Activated B cell treated with CpG ODN at 0.5 μM for 24 hours (primary cell): ENCODE measurements at regions of chr12 and their contacts with region 1.

Region 1: GRCh38 chr12:6533923-6534694 is at the start of gene GAPDH:
- DNase-seq: peak; percentile 75
- ATAC-seq: peak; percentile 70
- H3K4me3 Mint-ChIP-seq: peak within 1 kb of the TSS; percentile 94
- H3K27ac Mint-ChIP-seq: peak within 1 kb of the TSS; percentile 93
- H3K4me1 Mint-ChIP-seq: peaks cover 47% of the 10 kb centered on the region
- H3K27me3 Mint-ChIP-seq: no peaks in the 10 kb centered on the region
- CTCF ChIP-seq: no peak
- total RNA-seq, gene GAPDH: 1,003 and 1,033 TPM in 2 replicates

Region 2: DNA sequence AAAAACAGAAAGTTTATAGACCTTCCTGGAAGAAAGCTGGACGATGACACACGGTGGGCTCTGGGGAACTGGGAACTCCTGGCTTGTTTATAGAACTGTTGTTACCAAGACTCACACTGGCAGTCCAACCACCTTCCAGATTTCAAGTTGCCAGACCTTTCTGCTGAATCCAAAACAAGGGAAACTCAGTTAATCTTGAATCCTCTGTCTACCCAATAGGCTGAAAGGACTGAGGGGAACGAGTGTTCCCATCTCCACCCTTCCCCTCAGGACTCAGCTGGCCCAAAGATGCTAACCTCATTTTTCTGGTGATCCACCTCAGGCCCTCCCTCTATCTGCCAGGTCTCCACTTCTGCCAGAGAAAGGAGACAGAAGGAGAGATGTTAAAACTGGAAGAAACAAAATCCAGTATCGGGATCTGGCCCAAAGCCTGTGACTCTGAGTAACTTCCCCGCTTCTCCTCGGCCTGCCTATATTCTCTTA is 820.5 kb before region 1 on chr12:
- CTCF ChIA-PET with region 1: no interaction called
- POLR2A ChIA-PET with region 1: no interaction called
- intact Hi-C with region 1: no loop called
- DNase-seq: no peak
- ATAC-seq: no peak
- H3K4me3 Mint-ChIP-seq: no peak overlapping the region
- H3K27ac Mint-ChIP-seq: no peak overlapping the region
- H3K4me1 Mint-ChIP-seq: no peaks in the 10 kb centered on the region
- H3K27me3 Mint-ChIP-seq: no peaks in the 10 kb centered on the region
- CTCF ChIP-seq: no peak

Region 3: GRCh38 chr12:5988659-5989116 is 545.4 kb before region 1 on chr12:
- CTCF ChIA-PET with region 1: interaction called, 3 read pairs
- POLR2A ChIA-PET with region 1: no interaction called
- intact Hi-C with region 1: loop called (anchors 5 kb)
- DNase-seq: peak; percentile 60
- ATAC-seq: peak; percentile 91
- H3K4me3 Mint-ChIP-seq: no peak overlapping the region
- H3K27ac Mint-ChIP-seq: no peak overlapping the region
- H3K4me1 Mint-ChIP-seq: no peaks in the 10 kb centered on the region
- H3K27me3 Mint-ChIP-seq: peaks cover 2% of the 10 kb centered on the region
- CTCF ChIP-seq: peak; percentile 59

Region 4: GRCh38 chr12:6285063-6285477 is 249.0 kb before region 1 on chr12:
- CTCF ChIA-PET with region 1: interaction called, 3 read pairs
- POLR2A ChIA-PET with region 1: no interaction called
- intact Hi-C with region 1: loop called (anchors 1 kb)
- DNase-seq: no peak
- ATAC-seq: peak; percentile 81
- H3K4me3 Mint-ChIP-seq: no peak overlapping the region
- H3K27ac Mint-ChIP-seq: no peak overlapping the region
- H3K4me1 Mint-ChIP-seq: no peaks in the 10 kb centered on the region
- H3K27me3 Mint-ChIP-seq: peaks cover 41% of the 10 kb centered on the region
- CTCF ChIP-seq: peak; percentile 79

Region 5: GRCh38 chr12:6323340-6323994 is 210.6 kb before region 1 on chr12:
- CTCF ChIA-PET with region 1: no interaction called
- POLR2A ChIA-PET with region 1: no interaction called
- intact Hi-C with region 1: loop called (anchors 5 kb)
- DNase-seq: no peak
- ATAC-seq: peak; percentile 63
- H3K4me3 Mint-ChIP-seq: peak overlapping the region; percentile 8
- H3K27ac Mint-ChIP-seq: peak overlapping the region; percentile 42
- H3K4me1 Mint-ChIP-seq: peaks cover 19% of the 10 kb centered on the region
- H3K27me3 Mint-ChIP-seq: peaks cover 77% of the 10 kb centered on the region
- CTCF ChIP-seq: no peak

Region 6: GRCh38 chr12:6443361-6443983 is 90.6 kb before region 1 on chr12:
- CTCF ChIA-PET with region 1: interaction called, 4 read pairs
- POLR2A ChIA-PET with region 1: interaction called, 17 read pairs
- intact Hi-C with region 1: no loop called
- DNase-seq: no peak
- ATAC-seq: peak; percentile 49
- H3K4me3 Mint-ChIP-seq: peak overlapping the region; percentile 84
- H3K27ac Mint-ChIP-seq: peak overlapping the region; percentile 92
- H3K4me1 Mint-ChIP-seq: peaks cover 69% of the 10 kb centered on the region
- H3K27me3 Mint-ChIP-seq: no peaks in the 10 kb centered on the region
- CTCF ChIP-seq: no peak

Region 7: DNA sequence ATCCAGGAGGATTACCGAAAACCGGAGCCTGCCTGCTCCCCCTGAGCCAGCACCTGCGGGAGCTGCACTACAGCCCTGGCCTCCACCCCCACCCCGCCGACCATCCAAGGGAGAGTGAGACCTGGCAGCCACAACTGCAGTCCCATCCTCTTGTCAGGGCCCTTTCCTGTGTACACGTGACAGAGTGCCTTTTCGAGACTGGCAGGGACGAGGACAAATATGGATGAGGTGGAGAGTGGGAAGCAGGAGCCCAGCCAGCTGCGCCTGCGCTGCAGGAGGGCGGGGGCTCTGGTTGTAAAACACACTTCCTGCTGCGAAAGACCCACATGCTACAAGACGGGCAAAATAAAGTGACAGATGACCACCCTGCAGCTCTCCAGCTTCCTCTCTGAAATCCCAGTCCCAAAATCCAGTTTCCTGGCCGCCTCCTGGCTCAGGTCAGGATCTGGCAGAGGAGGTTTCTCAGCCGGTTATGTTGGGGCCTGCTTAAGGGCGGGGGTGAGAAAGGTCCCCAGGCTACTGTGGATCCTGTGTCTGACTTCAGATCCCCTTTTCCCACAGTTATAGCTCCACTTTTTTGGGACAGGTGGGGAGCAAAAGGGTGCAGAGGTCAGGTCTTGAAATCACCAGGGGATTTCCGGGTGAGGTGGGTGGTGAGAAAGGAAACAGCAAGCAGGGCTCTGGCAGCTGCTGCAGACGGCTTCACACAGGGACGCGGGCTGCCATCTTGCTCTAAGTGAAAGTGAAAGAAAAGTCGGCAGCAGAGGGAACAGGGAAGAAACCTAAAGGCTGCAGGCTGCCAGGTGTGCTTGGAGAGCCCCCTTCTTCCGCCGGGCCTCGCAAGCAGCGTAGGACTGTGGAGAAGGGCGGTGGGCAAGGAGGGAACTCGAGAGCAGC is 82.5 kb before region 1 on chr12 and contains the start of gene TAPBPL:
- CTCF ChIA-PET with region 1: interaction called, 6 read pairs
- POLR2A ChIA-PET with region 1: interaction called, 18 read pairs
- intact Hi-C with region 1: no loop called
- DNase-seq: peak; percentile 62
- ATAC-seq: peak; percentile 86
- H3K4me3 Mint-ChIP-seq: peak within 1 kb of the TSS; percentile 97
- H3K27ac Mint-ChIP-seq: peak within 1 kb of the TSS; percentile 99
- H3K4me1 Mint-ChIP-seq: peaks cover 58% of the 10 kb centered on the region
- H3K27me3 Mint-ChIP-seq: no peaks in the 10 kb centered on the region
- CTCF ChIP-seq: no peak
- total RNA-seq, gene TAPBPL: 52.5 and 64.0 TPM in 2 replicates

Region 8: DNA sequence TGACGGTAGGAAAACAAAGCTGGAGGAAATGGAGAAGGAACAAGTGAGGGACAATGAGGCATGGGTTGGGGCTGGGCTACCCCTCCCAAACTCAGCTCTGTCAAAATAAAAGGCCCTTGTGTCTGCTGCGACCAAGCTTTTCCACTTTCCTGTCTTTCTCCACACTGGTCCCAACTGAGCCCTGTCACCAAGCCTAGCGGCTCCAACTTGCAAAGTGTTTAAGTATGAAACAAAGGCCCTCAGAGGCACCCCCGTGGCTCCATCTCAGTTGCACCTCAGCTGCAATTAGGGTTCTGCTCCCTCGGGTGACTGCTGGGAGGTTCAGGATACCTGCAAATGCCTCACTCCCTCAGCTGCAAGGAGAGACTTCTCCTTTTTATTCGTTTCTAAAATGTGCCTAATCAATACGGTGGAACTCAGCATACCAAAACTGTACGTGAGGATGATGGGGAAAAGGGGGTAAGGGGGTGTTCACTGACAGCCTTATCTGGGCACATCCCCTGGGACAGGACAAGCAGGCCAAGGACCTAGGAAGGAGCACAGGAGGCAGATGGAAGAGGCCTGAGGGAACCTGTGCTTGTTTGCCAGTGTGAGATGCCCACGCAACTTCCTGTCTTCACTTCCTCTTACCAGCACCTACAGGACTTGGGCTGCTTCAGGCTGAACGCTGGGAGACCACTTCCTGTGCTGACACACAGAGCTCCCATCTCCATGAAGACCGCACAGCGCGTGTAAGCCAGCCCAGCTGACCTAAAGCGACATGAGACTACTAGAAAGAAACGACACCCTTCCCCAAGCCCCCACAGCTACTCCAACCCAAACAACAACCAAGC is 72.5 kb before region 1 on chr12:
- CTCF ChIA-PET with region 1: interaction called, 43 read pairs
- POLR2A ChIA-PET with region 1: interaction called, 32 read pairs
- intact Hi-C with region 1: loop called (anchors 1 kb)
- DNase-seq: peak; percentile 70
- ATAC-seq: peak; percentile 91
- H3K4me3 Mint-ChIP-seq: peak overlapping the region; percentile 70
- H3K27ac Mint-ChIP-seq: peak overlapping the region; percentile 99
- H3K4me1 Mint-ChIP-seq: peaks cover 89% of the 10 kb centered on the region
- H3K27me3 Mint-ChIP-seq: no peaks in the 10 kb centered on the region
- CTCF ChIP-seq: no peak